ENCODE measurements at regions of chr11 and their contacts with region 1.

Region 1: DNA sequence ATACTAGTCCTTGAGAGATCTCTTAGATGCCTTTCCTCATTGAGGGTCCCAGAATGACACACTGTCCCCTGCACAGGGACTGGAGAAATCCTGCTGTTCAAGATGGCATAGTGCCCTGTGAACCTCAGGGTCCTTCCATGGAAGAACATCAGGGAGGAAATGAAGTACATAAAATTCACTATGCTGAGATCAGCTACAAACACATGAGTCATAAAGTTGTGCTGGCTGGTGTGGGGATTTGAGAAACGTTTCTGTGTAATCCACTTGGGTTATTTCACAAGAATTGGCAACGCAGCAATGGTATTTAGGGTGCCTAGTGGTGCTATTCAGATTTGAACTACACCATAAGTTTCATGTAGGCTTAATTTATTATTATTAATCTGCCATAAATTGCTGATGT is 174.4 kb downstream of the MAML2 start:
- DNase-seq: peak; percentile 63 to 73
- H3K4me3 ChIP-seq: no peak overlapping the region
- H3K27ac ChIP-seq: peak overlapping the region; percentile 48 to 49
- H3K4me1 ChIP-seq: peaks cover 0 to 64% (median 33%) of the 10 kb centered on the region in 4 donors
- H3K27me3 ChIP-seq: no peaks in the 10 kb centered on the region
- CTCF ChIP-seq: peak in 1 of 2 experiments; percentile 18

Region 2: GRCh38 chr11:96122601-96123074 is 46.0 kb before region 1 on chr11:
- intact Hi-C with region 1: no loop called
- DNase-seq: no peak
- H3K4me3 ChIP-seq: no peak overlapping the region
- H3K27ac ChIP-seq: no peak overlapping the region
- H3K4me1 ChIP-seq: peaks cover 0 to 14% (median 0%) of the 10 kb centered on the region in 4 donors
- H3K27me3 ChIP-seq: no peaks in the 10 kb centered on the region
- CTCF ChIP-seq: no peak

Region 3: DNA sequence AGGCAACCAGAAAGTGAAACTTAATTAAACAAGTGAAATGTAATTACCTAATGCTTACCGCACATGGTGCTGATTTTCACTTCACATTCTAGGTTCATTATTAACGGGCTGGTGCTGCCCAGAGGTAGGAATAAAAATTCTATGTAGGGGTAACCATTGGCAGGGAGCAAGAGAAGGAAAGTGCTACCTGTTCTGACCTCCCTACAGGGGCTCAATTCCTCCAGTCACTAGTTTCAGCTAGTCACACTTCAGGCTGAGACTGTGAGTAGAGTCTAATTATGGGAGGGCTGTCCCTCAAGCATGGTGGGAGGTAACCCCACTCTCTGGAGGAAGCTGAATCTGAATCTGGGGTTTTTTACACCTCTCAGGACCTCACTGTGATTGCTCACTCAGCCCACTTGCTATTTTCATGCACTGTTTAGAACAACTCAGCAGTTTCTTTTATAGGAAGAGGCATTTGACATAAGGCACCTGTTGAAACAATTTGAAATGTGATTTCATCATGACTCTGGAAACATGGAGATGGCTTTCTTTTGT is 98.9 kb after region 1 on chr11:
- intact Hi-C with region 1: loop called (anchors 10 kb)
- DNase-seq: no peak
- H3K4me3 ChIP-seq: no peak overlapping the region
- H3K27ac ChIP-seq: peak overlapping the region; percentile 40
- H3K4me1 ChIP-seq: peaks cover 0 to 60% (median 46%) of the 10 kb centered on the region in 4 donors
- H3K27me3 ChIP-seq: no peaks in the 10 kb centered on the region
- CTCF ChIP-seq: no peak